ENCODE measurements at regions of chr1 and their contacts with region 1.

Region 1: DNA sequence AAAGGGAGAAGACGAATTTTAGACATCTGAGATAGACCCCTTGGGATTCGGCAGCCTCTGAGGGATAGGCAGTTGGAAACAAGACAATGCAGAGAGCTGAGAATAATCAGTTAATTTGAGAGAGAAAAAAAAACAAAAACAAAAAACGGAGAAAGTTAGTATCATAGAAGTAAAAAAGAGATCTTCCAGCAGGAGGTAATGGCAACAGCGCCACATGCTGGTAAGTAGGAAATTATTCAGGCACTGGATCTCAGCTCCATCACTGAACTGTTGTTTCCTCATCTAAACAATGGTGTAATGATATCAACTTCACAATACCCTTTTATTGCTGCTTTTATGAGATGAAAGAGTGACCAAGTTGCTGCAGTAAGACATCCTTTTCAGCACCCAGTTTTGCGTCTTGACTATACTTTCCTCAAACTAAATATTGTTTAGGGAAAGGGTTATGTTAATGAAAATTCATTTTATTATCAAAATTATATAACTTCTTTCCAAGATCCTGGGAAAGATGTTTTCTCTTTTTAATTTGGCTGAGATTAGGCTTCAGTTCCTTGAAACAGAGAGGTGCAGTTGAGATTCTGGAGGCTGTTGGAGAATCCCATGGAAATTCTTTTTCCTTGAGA is 91.4 kb upstream of the KCNA3 start:
- DNase-seq: no peak
- H3K4me3 ChIP-seq: no peak overlapping the region
- H3K27ac ChIP-seq: no peak overlapping the region
- H3K4me1 ChIP-seq: peaks cover 0 to 4% (median 0%) of the 10 kb centered on the region in 3 donors
- H3K27me3 ChIP-seq: peaks cover 0 to 58% (median 0%) of the 10 kb centered on the region in 4 donors
- CTCF ChIP-seq: peak; percentile 53 to 78 (median 74)
- POLR2A ChIP-seq: no peak

Region 2: DNA sequence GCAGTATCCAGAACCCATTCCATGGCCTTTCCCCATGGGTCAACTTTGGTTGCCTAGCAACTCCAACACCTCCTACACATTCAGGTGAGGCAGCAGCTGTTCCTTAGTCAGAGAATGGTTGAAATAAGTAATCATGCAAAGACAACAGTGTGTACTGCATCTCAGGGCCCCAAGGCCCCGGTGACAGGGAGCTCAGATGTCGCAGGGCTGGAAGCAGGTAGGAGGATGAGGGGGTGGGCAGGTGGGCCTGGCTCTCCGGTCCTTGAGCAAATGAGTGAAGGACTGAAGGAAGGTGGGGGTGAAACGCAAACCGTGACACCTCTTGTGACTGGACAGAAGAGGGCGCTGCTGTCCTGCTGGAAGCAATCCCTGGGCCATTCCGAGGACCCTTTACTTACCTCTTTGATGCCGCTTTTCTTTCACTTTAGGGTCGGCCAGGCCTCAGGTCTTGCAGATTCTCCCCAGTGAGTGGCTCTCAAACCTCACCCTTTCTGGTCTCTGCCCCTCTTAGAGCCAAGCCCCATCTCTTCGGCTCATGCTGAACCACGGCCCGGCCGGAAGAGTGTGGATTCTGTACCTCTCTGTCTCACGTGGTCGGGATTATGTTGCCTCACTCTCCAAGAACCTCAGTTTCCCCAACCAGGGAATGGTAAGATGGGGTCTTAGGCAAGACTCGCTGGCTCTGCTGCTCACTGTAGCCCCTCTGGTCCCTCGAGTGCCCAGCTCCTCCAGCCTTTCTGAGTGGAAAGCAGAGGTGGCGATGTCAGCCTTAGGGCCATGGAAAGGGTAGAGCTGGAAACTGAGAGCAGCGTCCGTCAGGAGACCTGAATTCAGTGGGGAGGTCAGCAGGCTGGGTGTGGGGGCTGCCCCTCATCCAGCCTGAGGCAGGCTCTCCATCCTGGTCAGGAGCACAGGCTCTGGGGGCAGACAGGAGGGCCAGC is 241.6 kb before region 1 on chr1:
- intact Hi-C with region 1: loop called (anchors 10 kb)
- DNase-seq: no peak
- H3K4me3 ChIP-seq: no peak overlapping the region
- H3K27ac ChIP-seq: no peak overlapping the region
- H3K4me1 ChIP-seq: peaks cover 0 to 10% (median 0%) of the 10 kb centered on the region in 3 donors
- H3K27me3 ChIP-seq: peaks cover 0 to 84% (median 0%) of the 10 kb centered on the region in 4 donors
- CTCF ChIP-seq: peak in 5 of 6 experiments; percentile 30 to 66 (median 49)
- POLR2A ChIP-seq: no peak

Region 3: GRCh38 chr1:110630839-110631663 is 135.1 kb before region 1 on chr1:
- intact Hi-C with region 1: loop called (anchors 5 kb)
- DNase-seq: no peak
- H3K4me3 ChIP-seq: no peak overlapping the region
- H3K27ac ChIP-seq: peak overlapping the region in 2 of 4 donors; percentile 25 to 46
- H3K4me1 ChIP-seq: peaks cover 11 to 19% (median 18%) of the 10 kb centered on the region in 3 donors
- H3K27me3 ChIP-seq: peaks cover 0 to 31% (median 0%) of the 10 kb centered on the region in 4 donors
- CTCF ChIP-seq: peak; percentile 74 to 88 (median 80)
- POLR2A ChIP-seq: no peak

Region 4: GRCh38 chr1:111085676-111086075 is 319.5 kb after region 1 on chr1:
- intact Hi-C with region 1: no loop called
- DNase-seq: no peak
- H3K4me3 ChIP-seq: no peak overlapping the region
- H3K27ac ChIP-seq: no peak overlapping the region
- H3K4me1 ChIP-seq: no peaks in the 10 kb centered on the region
- H3K27me3 ChIP-seq: no peaks in the 10 kb centered on the region
- CTCF ChIP-seq: no peak
- POLR2A ChIP-seq: no peak

Measured in esophagus squamous epithelium (tissue), 5 donors.